Spleen (tissue), 13 donors: ENCODE measurements at regions of chr3 and their contacts with region 1.

Region 1: GRCh38 chr3:151501923-151502632 is 41.2 kb upstream of the IGSF10 start:
- DNase-seq: no peak
- H3K4me3 ChIP-seq: no peak overlapping the region
- H3K27ac ChIP-seq: no peak overlapping the region
- H3K4me1 ChIP-seq: no peaks in the 10 kb centered on the region
- H3K27me3 ChIP-seq: no peaks in the 10 kb centered on the region
- CTCF ChIP-seq: no peak
- POLR2A ChIP-seq: no peak

Region 2: GRCh38 chr3:151379083-151379734 is 122.9 kb before region 1 on chr3:
- intact Hi-C with region 1: no loop called
- DNase-seq: no peak
- H3K4me3 ChIP-seq: no peak overlapping the region
- H3K27ac ChIP-seq: no peak overlapping the region
- H3K4me1 ChIP-seq: peaks cover 0 to 34% (median 20%) of the 10 kb centered on the region in 6 donors
- H3K27me3 ChIP-seq: no peaks in the 10 kb centered on the region
- CTCF ChIP-seq: peak in 6 of 11 experiments; percentile 9 to 51 (median 44)
- POLR2A ChIP-seq: no peak

Region 3: GRCh38 chr3:151558661-151559060 is 56.6 kb after region 1 on chr3:
- intact Hi-C with region 1: loop called (anchors 2 kb)
- DNase-seq: no peak
- H3K4me3 ChIP-seq: no peak overlapping the region
- H3K27ac ChIP-seq: no peak overlapping the region
- H3K4me1 ChIP-seq: no peaks in the 10 kb centered on the region
- H3K27me3 ChIP-seq: no peaks in the 10 kb centered on the region
- CTCF ChIP-seq: no peak
- POLR2A ChIP-seq: no peak